AG04450 (cell line): ENCODE measurements at regions of chr15 and their contacts with region 1.

Region 1: DNA sequence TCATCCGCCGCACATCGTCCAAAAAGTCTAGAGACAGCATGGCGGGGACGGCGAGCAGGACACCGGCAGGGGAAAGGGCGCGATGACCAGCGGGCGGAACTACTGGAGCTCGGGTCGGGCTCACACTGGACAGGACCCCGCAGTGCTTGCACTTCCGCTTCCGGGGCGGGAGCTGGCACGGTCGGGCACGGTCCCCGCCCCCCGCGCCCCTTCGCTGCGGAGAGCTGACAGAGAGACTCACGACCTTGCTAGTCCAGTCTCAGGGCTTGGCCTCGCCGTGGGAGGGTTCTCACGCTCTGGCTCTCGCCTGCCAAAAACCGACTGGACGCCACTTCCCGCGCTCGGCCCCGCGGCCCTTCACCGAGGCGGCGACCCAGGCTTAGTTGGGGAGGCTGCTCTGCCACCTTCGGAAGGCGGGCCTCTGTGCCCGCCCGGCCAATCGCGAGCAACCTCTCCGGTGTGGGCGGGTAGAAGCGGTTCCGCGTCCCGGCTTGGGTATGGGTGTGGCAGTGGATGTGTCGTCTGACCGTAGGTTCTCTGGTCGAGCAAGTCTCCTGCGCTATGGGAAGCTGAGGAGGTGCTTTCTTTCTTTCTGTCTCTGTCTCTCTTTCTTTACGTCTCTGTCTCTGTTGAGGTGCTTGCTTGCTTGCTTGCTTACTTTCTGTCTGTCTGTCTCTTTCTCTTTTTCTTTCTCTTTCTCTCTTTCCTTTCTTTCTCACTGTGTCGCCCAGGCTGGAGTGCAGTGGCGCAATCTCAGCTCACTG is at the start of gene SEC11A:
- DNase-seq: peak; percentile 77
- H3K4me3 ChIP-seq: peak within 1 kb of the TSS; percentile 94
- H3K27ac ChIP-seq: peak within 1 kb of the TSS; percentile 75
- H3K27me3 ChIP-seq: no peaks in the 10 kb centered on the region
- CTCF ChIP-seq: no peak
- polyA plus RNA-seq, gene SEC11A: 218 and 324 TPM in 2 replicates

Region 2: DNA sequence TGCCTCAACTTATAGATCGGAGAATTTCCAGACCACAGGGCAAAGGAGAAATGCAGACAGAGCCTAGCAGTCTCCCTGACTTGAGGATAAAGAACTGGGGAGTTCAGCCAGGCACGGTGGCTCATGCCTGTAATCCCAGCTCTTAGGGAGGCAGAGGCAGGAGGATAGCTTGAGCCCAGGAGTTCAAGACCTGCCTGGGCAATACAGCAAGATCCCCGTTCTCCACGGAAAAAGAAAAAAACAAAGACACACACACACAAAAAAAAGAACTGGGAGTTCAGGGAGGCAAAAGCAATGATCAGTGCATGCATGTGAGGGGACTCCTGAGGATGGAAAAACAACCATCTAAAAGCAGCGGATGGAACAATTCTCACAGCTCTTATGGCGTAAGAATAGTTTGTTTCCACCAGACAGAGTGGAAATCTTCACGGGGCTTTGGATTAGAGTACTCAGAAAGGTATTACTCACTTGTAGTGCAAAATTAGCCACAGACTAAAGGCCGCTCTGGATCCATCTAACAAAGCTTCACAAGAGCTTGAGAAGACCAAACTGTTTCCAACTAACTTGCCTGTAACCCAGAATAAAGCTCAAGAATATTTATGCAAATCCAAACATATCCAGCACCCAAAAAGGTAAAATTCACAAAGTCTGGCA is 16.6 kb before region 1 on chr15:
- CTCF ChIA-PET with region 1: interaction called, 3 read pairs
- POLR2A ChIA-PET with region 1: interaction called, 10 read pairs
- DNase-seq: no peak
- H3K4me3 ChIP-seq: no peak overlapping the region
- H3K27ac ChIP-seq: no peak overlapping the region
- H3K27me3 ChIP-seq: no peaks in the 10 kb centered on the region
- CTCF ChIP-seq: no peak

Region 3: DNA sequence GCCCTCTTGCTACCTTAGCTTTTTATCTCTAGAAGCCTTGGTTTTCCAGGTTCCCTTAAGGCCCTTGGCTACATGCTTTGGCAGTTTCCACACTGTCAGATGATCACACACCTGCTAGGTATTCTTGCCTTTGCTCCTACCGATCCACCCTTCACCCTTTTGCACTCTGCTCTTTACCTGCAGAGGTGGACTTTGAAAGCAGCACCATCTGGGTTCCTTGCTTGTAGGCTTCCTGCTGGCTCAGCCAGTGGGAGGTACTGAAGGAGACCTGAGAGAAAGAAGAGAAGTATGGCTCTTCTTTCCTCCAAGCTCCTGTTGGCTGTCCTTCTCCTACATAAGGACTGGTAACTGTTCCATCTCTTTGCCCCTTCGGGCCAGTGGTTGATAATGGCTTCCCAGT is 24.9 kb after region 1 on chr15:
- CTCF ChIA-PET with region 1: no interaction called
- POLR2A ChIA-PET with region 1: no interaction called
- DNase-seq: no peak
- H3K4me3 ChIP-seq: no peak overlapping the region
- H3K27ac ChIP-seq: no peak overlapping the region
- H3K27me3 ChIP-seq: no peaks in the 10 kb centered on the region
- CTCF ChIP-seq: no peak